Ascending aorta (tissue), 2 donors: ENCODE measurements at regions of chr5 and their contacts with region 1.

Region 1: GRCh38 chr5:58460732-58461286 is 923 bp upstream of the PLK2 start:
- DNase-seq: peak in 1 of 2 donors; percentile 95
- H3K4me3 ChIP-seq: peak overlapping the region; percentile 83 to 92
- H3K27ac ChIP-seq: peak overlapping the region; percentile 98 to 99
- H3K4me1 ChIP-seq: peaks cover 0 to 6% of the 10 kb centered on the region in 2 donors
- H3K27me3 ChIP-seq: no peaks in the 10 kb centered on the region
- CTCF ChIP-seq: peak; percentile 66 to 78 (median 72)

Region 2: GRCh38 chr5:56909294-56910209 is 1551.3 kb before region 1 on chr5 and contains the start of gene SETD9:
- intact Hi-C with region 1: loop called (anchors 2 kb)
- DNase-seq: peak; percentile 90 to 99
- H3K4me3 ChIP-seq: peak within 1 kb of the TSS; percentile 63 to 92
- H3K27ac ChIP-seq: peak within 1 kb of the TSS; percentile 90 to 99
- H3K4me1 ChIP-seq: peaks cover 2 to 6% of the 10 kb centered on the region in 2 donors
- H3K27me3 ChIP-seq: no peaks in the 10 kb centered on the region
- CTCF ChIP-seq: no peak
- total RNA-seq, gene SETD9: 16.8 TPM

Region 3: GRCh38 chr5:57298295-57298984 is 1162.4 kb before region 1 on chr5:
- intact Hi-C with region 1: loop called (anchors 1 kb)
- DNase-seq: peak in 1 of 2 donors; percentile 91
- H3K4me3 ChIP-seq: peak overlapping the region; percentile 28 to 48
- H3K27ac ChIP-seq: no peak overlapping the region
- H3K4me1 ChIP-seq: peaks cover 4% of the 10 kb centered on the region in 2 donors
- H3K27me3 ChIP-seq: no peaks in the 10 kb centered on the region
- CTCF ChIP-seq: peak; percentile 57 to 82 (median 79)

Region 4: GRCh38 chr5:57692582-57693487 is 768.0 kb before region 1 on chr5:
- intact Hi-C with region 1: loop called (anchors 2 kb)
- DNase-seq: peak; percentile 73 to 92
- H3K4me3 ChIP-seq: no peak overlapping the region
- H3K27ac ChIP-seq: peak overlapping the region; percentile 4 to 76
- H3K4me1 ChIP-seq: peaks cover 1 to 24% of the 10 kb centered on the region in 2 donors
- H3K27me3 ChIP-seq: no peaks in the 10 kb centered on the region
- CTCF ChIP-seq: no peak

Region 5: DNA sequence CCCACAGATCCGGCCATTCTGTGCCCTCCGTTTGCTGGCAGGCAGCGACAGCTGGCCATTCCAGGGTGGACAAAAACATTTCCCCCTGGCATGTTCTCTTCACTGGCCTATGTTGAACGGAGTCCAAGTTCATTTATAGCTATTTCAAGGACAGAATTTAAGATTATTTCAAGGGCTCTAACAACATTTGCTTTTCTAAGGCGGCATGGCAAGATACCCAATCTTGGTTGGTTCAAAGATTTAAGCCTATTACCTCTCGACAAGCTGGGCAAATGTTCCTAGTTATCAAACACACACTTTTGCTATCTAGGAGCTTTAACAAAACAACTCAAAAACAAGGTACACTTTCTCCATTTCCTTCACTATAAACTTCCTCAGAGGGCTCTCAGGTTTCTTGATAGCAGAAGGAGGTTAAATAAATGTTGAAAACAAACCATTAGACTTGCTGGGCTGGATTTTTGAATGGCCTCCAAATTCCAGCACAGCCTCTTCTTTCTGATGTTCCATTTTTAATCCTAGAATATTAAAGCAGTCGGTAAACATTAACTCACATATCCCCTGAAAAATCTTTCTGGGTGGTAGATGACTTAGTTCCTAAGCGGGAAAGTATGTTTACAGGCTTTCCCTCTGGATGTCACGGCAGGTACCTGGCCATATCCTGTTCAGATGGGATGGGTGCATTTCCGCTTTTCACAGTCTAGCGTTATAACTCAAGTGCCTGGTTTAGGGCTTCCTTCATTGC is 333.2 kb before region 1 on chr5:
- intact Hi-C with region 1: loop called (anchors 5 kb)
- DNase-seq: no peak
- H3K4me3 ChIP-seq: no peak overlapping the region
- H3K27ac ChIP-seq: peak overlapping the region; percentile 61 to 71
- H3K4me1 ChIP-seq: peaks cover 5 to 21% of the 10 kb centered on the region in 2 donors
- H3K27me3 ChIP-seq: no peaks in the 10 kb centered on the region
- CTCF ChIP-seq: no peak

Region 6: GRCh38 chr5:58407042-58407719 is 53.6 kb before region 1 on chr5:
- intact Hi-C with region 1: loop called (anchors 10 kb)
- DNase-seq: no peak
- H3K4me3 ChIP-seq: no peak overlapping the region
- H3K27ac ChIP-seq: no peak overlapping the region
- H3K4me1 ChIP-seq: no peaks in the 10 kb centered on the region
- H3K27me3 ChIP-seq: no peaks in the 10 kb centered on the region
- CTCF ChIP-seq: no peak